GM12878 (cell line): ENCODE measurements at regions of chr10 and their contacts with region 1.

Region 1: DNA sequence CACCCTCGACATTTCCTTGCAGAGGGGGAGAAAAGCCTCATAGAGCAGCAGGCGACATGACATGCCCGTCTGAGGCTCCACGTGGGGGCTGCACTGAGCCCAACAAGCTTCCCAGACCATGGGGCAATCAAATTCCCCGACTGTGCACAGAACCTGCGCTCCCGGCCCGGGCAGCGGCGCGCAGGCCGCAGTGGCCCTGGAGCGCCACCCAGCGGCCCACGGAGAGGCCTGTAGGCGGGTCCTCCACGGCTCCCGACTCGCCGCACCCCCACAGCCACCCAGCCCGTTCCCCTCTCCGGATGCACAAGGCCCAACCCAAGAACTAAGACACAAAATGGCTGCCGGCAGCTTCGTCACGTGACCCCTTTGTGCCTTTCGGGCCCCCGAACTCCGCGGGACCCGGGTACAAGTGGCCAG is 816 bp downstream of the EPC1 start:
- DNase-seq: peak; percentile 82
- ATAC-seq: peak; percentile 87
- H3K4me3 ChIP-seq: peak overlapping the region; percentile 84
- H3K27ac ChIP-seq: peak overlapping the region; percentile 100
- H3K4me1 ChIP-seq: peaks cover 4% of the 10 kb centered on the region; the same call in 1 of the 2 replicates
- H3K27me3 ChIP-seq: no peaks in the 10 kb centered on the region
- CTCF ChIP-seq: peak; percentile 92 to 99 (median 93); a peak in 5 of 6 replicates
- EP300 ChIP-seq: 0 out of 4 replicates have a peak, but pooled peaks of 1 of the 2 experiments have one; percentile 29
- POLR2A ChIP-seq: no peak; the same call in 1 of the 2 replicates
- RAD21 ChIP-seq: peak; percentile 87

Region 2: GRCh38 chr10:32055813-32056600 is 290.1 kb before region 1 on chr10 and contains the start of gene KIF5B:
- CTCF ChIA-PET with region 1: interaction called, 4 read pairs
- POLR2A ChIA-PET with region 1: no interaction called
- RAD21 ChIA-PET with region 1: no interaction called
- SMC1A ChIA-PET with region 1: no interaction called
- in situ Hi-C with region 1: loop called (anchors 10 kb)
- intact Hi-C with region 1: loop called (anchors 10 kb)
- DNase-seq: peak; percentile 44
- ATAC-seq: peak; percentile 90
- H3K4me3 ChIP-seq: peak within 1 kb of the TSS; percentile 83
- H3K27ac ChIP-seq: peak within 1 kb of the TSS; percentile 87
- H3K4me1 ChIP-seq: peaks cover 8% of the 10 kb centered on the region
- H3K27me3 ChIP-seq: no peaks in the 10 kb centered on the region
- CTCF ChIP-seq: no peak
- EP300 ChIP-seq: no peak
- POLR2A ChIP-seq: peak; percentile 99
- RAD21 ChIP-seq: no peak
- polyA plus RNA-seq, gene KIF5B: 14.7 to 15.3 TPM

Region 3: GRCh38 chr10:32256613-32257437 is 89.3 kb before region 1 on chr10:
- CTCF ChIA-PET with region 1: interaction called, 79 read pairs
- POLR2A ChIA-PET with region 1: interaction called, 5 read pairs
- RAD21 ChIA-PET with region 1: interaction called, 30 read pairs
- SMC1A ChIA-PET with region 1: interaction called, 30 read pairs
- in situ Hi-C with region 1: loop called (anchors 10 kb)
- intact Hi-C with region 1: loop called (anchors 1 kb)
- DNase-seq: peak; percentile 46
- ATAC-seq: peak; percentile 91
- H3K4me3 ChIP-seq: no peak overlapping the region
- H3K27ac ChIP-seq: no peak overlapping the region
- H3K4me1 ChIP-seq: no peaks in the 10 kb centered on the region; the same call in 1 of the 2 replicates
- H3K27me3 ChIP-seq: no peaks in the 10 kb centered on the region
- CTCF ChIP-seq: peak; percentile 93 to 96 (median 94); a peak in 5 of 6 replicates
- EP300 ChIP-seq: no peak
- POLR2A ChIP-seq: no peak
- RAD21 ChIP-seq: peak; percentile 88

Region 4: DNA sequence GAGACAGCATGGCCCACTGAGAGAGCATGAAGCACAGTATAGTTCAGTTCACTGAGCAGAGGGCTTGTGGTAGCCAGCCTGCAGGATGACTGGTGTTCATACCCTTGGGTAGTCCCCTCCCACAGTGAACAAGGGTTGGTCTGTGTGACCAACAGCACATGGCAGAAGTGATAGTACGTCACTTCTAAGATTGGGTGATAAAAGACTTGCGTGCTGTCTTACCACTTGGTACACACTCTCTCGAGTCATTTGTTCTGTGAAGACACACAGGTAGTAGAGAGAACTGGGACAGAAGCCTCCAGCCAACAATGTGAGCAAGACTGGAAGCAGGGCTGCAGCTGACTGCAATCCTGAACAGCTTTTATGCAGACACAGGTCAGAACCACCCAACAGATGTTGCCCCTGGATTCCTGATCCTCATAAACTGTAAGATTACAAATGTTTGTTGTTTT is 13.8 kb before region 1 on chr10:
- CTCF ChIA-PET with region 1: interaction called, 11 read pairs
- POLR2A ChIA-PET with region 1: interaction called, 8 read pairs
- RAD21 ChIA-PET with region 1: interaction called, 16 read pairs
- SMC1A ChIA-PET with region 1: interaction called, 59 read pairs
- in situ Hi-C with region 1: no loop called
- intact Hi-C with region 1: no loop called
- DNase-seq: peak; percentile 93
- ATAC-seq: peak; percentile 91
- H3K4me3 ChIP-seq: peak overlapping the region; percentile 6; the same call in 1 of the 2 replicates
- H3K27ac ChIP-seq: peak overlapping the region; percentile 80
- H3K4me1 ChIP-seq: peaks cover 37% of the 10 kb centered on the region
- H3K27me3 ChIP-seq: no peaks in the 10 kb centered on the region
- CTCF ChIP-seq: no peak
- EP300 ChIP-seq: peak; percentile 96; a peak in 3 of 4 replicates
- POLR2A ChIP-seq: peak; percentile 82
- RAD21 ChIP-seq: no peak

Region 5: DNA sequence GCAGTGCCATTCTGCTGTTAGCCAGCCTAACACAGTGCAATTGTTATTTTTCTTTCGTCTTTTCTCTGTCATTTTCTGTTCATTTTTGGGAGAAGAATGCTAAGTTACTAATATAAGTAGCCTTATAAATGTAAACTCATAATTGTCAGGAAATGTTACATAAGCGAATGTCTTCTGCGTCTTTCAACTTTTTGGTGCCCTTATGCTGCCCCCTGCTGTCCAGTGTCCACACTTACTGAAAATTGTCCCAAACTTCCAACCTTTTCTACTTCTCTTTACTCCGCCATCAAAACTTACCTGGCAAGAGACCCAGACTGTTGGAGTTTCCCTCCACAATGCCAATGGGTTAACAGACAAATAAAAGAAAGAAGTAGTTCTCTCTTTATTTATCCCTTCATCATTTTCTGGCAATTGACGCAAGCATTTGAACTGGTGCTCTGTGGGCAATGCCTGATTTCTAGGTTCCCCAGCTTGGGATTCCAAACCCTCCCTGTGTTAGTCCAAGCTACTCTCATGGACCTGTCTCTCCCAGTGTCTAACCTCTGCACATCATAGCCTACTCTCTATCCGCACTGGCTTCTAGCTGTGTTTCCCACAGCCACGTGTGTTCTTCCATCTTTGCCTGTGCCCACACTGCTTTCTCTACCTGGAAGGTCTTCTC is 21.8 kb after region 1 on chr10:
- CTCF ChIA-PET with region 1: interaction called, 29 read pairs
- POLR2A ChIA-PET with region 1: interaction called, 6 read pairs
- RAD21 ChIA-PET with region 1: interaction called, 11 read pairs
- SMC1A ChIA-PET with region 1: interaction called, 25 read pairs
- in situ Hi-C with region 1: no loop called
- intact Hi-C with region 1: no loop called
- DNase-seq: no peak
- ATAC-seq: peak; percentile 65
- H3K4me3 ChIP-seq: no peak overlapping the region
- H3K27ac ChIP-seq: no peak overlapping the region
- H3K4me1 ChIP-seq: no peaks in the 10 kb centered on the region
- H3K27me3 ChIP-seq: no peaks in the 10 kb centered on the region
- CTCF ChIP-seq: peak; percentile 61 to 80 (median 69)
- EP300 ChIP-seq: no peak
- POLR2A ChIP-seq: no peak
- RAD21 ChIP-seq: peak; percentile 75

Region 6: GRCh38 chr10:32433542-32433941 is 87.4 kb after region 1 on chr10:
- CTCF ChIA-PET with region 1: no interaction called
- POLR2A ChIA-PET with region 1: no interaction called
- RAD21 ChIA-PET with region 1: no interaction called
- SMC1A ChIA-PET with region 1: no interaction called
- in situ Hi-C with region 1: no loop called
- intact Hi-C with region 1: no loop called
- DNase-seq: no peak
- ATAC-seq: no peak
- H3K4me3 ChIP-seq: no peak overlapping the region
- H3K27ac ChIP-seq: no peak overlapping the region
- H3K4me1 ChIP-seq: no peaks in the 10 kb centered on the region
- H3K27me3 ChIP-seq: no peaks in the 10 kb centered on the region
- CTCF ChIP-seq: no peak
- EP300 ChIP-seq: no peak
- POLR2A ChIP-seq: no peak
- RAD21 ChIP-seq: no peak

Region 7: GRCh38 chr10:32746869-32747268 is 400.7 kb after region 1 on chr10:
- CTCF ChIA-PET with region 1: no interaction called
- POLR2A ChIA-PET with region 1: no interaction called
- RAD21 ChIA-PET with region 1: no interaction called
- SMC1A ChIA-PET with region 1: no interaction called
- in situ Hi-C with region 1: no loop called
- intact Hi-C with region 1: no loop called
- DNase-seq: no peak
- ATAC-seq: no peak
- H3K4me3 ChIP-seq: no peak overlapping the region
- H3K27ac ChIP-seq: no peak overlapping the region
- H3K4me1 ChIP-seq: no peaks in the 10 kb centered on the region
- H3K27me3 ChIP-seq: no peaks in the 10 kb centered on the region
- CTCF ChIP-seq: no peak
- EP300 ChIP-seq: no peak
- POLR2A ChIP-seq: no peak
- RAD21 ChIP-seq: no peak